ENCODE measurements at regions of chr1 and their contacts with region 1.

Region 1: DNA sequence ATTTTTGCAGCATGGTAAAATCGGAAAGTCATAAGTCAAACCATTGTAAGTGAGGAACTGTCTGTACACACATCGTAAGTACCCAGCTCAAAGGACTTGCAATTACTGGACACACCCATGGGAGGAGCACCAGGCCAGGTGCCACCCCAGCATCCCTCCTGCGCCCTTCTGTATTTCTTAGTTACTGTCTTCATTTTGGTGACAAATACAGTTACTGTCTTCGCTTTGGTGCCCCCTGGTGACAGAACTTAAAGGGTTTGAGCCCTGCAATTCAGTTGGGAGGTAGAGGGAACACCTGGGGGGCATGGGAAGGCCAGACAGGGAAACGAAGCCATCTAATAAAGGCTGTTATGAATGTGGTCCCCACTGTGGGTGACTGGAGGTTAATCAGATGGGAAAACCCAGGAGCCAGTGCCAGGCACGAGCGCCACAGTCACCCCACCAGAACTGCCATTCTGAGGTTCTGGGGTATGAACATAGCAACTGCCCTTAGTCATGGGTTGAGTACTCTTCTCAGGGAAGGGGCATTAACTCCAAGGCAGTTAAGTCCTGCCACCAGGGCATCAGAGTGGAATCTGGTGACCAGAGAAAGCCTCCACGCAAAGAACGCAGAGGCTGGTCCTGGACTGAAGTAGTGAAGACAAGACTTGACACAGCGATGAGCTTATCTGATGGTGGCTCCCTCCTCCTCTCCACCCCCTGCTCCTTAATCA is 612.9 kb downstream of the PTPRU start:
- DNase-seq: peak; percentile 1
- ATAC-seq: peak; percentile 71
- H3K4me3 ChIP-seq: no peak overlapping the region
- H3K27ac ChIP-seq: no peak overlapping the region
- H3K4me1 ChIP-seq: no peaks in the 10 kb centered on the region
- H3K27me3 ChIP-seq: no peaks in the 10 kb centered on the region; a peak in 2 of 4 replicates
- CTCF ChIP-seq: peak; percentile 42 to 56 (median 53)
- EP300 ChIP-seq: no peak
- POLR2A ChIP-seq: no peak
- RAD21 ChIP-seq: peak; percentile 69

Region 2: GRCh38 chr1:29245876-29246275 is 603.3 kb before region 1 on chr1:
- CTCF ChIA-PET with region 1: no interaction called
- POLR2A ChIA-PET with region 1: no interaction called
- RAD21 ChIA-PET with region 1: no interaction called
- SMC1A ChIA-PET with region 1: no interaction called
- in situ Hi-C with region 1: loop called (anchors 10 kb)
- intact Hi-C with region 1: no loop called
- DNase-seq: no peak
- ATAC-seq: peak; percentile 73
- H3K4me3 ChIP-seq: no peak overlapping the region
- H3K27ac ChIP-seq: no peak overlapping the region
- H3K4me1 ChIP-seq: no peaks in the 10 kb centered on the region
- H3K27me3 ChIP-seq: peaks cover 0 to 2% of the 10 kb centered on the region in 2 experiments; a peak in 1 of 4 replicates
- CTCF ChIP-seq: peak; percentile 31 to 48 (median 44); a peak in 3 of 6 replicates
- EP300 ChIP-seq: no peak
- POLR2A ChIP-seq: no peak
- RAD21 ChIP-seq: peak; percentile 31; the same call in 1 of the 2 replicates

Region 3: DNA sequence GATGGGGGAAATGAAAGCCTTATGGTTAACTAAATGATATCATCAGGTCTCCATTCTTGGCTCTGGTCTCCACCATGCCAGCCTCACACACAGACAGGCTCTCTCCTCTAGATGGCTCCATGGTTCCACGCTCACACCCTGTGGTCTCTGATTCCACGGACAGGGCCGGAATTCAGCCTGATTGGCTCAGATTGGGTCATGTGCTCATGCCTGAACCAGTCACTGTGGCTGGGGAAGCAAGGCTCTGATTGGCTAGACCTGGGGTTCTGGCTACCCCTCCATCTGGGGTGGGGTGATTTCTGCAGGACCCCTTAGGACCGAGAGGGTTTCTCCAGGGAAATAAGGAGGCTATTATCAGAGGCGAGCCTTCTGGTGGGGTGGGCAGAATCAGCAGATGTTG is 335.8 kb before region 1 on chr1:
- CTCF ChIA-PET with region 1: no interaction called
- POLR2A ChIA-PET with region 1: no interaction called
- RAD21 ChIA-PET with region 1: no interaction called
- SMC1A ChIA-PET with region 1: no interaction called
- in situ Hi-C with region 1: no loop called
- intact Hi-C with region 1: loop called (anchors 2 kb)
- DNase-seq: peak; percentile 9
- ATAC-seq: peak; percentile 92
- H3K4me3 ChIP-seq: no peak overlapping the region
- H3K27ac ChIP-seq: no peak overlapping the region
- H3K4me1 ChIP-seq: no peaks in the 10 kb centered on the region
- H3K27me3 ChIP-seq: peaks cover 0 to under 1% of the 10 kb centered on the region in 2 experiments; a peak in 1 of 4 replicates
- CTCF ChIP-seq: peak; percentile 34 to 59 (median 43); a peak in 5 of 6 replicates
- EP300 ChIP-seq: no peak
- POLR2A ChIP-seq: no peak
- RAD21 ChIP-seq: peak; percentile 82